AG04449 (cell line): ENCODE measurements at regions of chr1 and their contacts with region 1.

Region 1: GRCh38 chr1:1033009-1033587 is 13.2 kb downstream of the AGRN start:
- DNase-seq: no peak
- H3K4me3 ChIP-seq: peak overlapping the region; percentile 29
- CTCF ChIP-seq: peak; percentile 82

Region 2: GRCh38 chr1:1019122-1019999 is 13.7 kb before region 1 on chr1:
- CTCF ChIA-PET with region 1: interaction called, 17 read pairs
- POLR2A ChIA-PET with region 1: interaction called, 5 read pairs
- DNase-seq: no peak
- H3K4me3 ChIP-seq: peak overlapping the region; percentile 59
- CTCF ChIP-seq: peak; percentile 74

Region 3: DNA sequence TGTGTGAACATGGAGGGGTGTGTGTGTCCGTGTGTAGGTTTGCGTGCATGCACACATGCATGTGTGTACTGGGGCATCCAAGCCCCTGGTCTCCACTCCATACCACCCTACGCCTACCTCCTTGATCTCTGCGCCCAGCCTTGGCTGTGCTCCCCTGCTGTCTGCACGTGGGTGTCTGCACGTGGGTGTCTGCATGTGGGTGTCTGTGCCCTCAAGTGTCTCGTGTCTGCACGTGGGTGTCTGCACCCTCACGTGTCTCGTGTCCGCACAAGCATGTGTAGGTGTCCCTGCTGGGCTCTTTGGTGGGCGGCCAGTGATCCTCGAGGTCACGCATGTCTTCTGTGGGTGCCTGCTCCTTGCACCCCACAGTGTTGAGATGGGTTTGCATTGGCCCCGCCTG is 19.9 kb after region 1 on chr1:
- CTCF ChIA-PET with region 1: no interaction called
- POLR2A ChIA-PET with region 1: no interaction called
- DNase-seq: no peak
- H3K4me3 ChIP-seq: no peak overlapping the region
- CTCF ChIP-seq: no peak

Region 4: DNA sequence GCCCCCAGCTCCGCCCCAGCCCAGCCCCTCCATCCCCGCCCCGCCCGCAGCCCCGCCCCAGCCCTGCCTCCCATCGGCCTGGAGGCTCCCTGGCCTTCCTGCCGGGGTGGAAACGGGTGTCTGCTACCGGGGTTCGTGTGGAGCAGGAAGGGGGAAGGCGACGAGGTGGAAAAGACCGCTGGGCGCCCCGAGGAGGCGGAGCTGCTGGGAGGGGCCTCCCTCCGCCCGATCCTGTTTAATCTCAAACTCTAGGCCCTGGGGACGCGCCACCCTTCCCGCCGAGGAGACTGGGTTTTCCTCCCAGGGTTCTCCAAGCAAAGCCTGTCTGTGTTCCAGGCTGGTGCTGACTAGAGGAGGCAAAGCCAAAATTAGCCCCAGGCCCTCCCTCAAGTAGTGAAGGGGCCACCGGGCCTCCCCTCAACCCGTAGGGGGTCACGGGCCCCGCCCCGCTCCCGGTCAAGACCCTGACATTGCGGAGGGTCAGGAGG is 124.4 kb after region 1 on chr1:
- CTCF ChIA-PET with region 1: no interaction called
- POLR2A ChIA-PET with region 1: no interaction called
- DNase-seq: peak; percentile 24
- H3K4me3 ChIP-seq: peak overlapping the region; percentile 57
- CTCF ChIP-seq: no peak

Region 5: DNA sequence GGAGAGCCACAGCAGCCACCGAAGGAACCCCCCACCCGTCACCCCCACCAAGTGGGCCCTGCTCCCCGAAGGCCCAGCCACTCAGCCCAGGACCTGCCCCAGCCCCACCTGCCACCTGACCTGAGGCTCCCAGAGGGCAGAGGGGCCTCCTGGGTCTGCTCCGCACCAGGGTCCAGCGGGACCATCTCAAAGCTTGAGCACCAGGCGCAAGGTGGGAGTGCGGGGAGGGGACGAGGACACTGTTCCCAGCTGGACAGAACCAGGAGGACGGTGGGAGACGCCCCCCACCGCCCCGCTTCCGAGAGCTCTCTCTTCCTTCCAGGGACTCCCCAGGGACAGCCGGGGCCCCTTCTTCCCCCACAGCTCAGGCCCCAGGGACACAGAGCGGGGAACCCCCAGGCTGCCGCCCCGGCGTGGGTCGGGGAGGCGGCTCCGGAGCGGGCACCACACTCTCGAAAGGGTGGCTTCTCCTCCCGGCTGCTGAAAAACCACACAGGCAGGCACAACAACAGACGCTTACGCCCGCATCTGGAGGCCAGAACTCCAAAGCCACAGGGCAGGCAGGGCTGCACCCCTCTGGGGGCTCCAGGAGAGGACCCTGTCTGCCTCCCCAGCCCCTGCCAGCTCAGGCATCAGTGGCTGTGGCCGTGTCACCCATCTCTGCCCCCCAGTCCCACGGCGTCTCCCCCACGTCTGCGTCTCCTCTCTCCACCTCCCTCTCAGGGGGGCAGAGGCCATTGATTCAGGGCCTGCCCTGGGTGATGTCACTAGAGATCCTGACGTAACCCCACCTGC is 138.6 kb after region 1 on chr1:
- CTCF ChIA-PET with region 1: no interaction called
- POLR2A ChIA-PET with region 1: no interaction called
- DNase-seq: no peak
- H3K4me3 ChIP-seq: no peak overlapping the region
- CTCF ChIP-seq: no peak